ENCODE measurements at regions of chr11 and their contacts with region 1.

Region 1: DNA sequence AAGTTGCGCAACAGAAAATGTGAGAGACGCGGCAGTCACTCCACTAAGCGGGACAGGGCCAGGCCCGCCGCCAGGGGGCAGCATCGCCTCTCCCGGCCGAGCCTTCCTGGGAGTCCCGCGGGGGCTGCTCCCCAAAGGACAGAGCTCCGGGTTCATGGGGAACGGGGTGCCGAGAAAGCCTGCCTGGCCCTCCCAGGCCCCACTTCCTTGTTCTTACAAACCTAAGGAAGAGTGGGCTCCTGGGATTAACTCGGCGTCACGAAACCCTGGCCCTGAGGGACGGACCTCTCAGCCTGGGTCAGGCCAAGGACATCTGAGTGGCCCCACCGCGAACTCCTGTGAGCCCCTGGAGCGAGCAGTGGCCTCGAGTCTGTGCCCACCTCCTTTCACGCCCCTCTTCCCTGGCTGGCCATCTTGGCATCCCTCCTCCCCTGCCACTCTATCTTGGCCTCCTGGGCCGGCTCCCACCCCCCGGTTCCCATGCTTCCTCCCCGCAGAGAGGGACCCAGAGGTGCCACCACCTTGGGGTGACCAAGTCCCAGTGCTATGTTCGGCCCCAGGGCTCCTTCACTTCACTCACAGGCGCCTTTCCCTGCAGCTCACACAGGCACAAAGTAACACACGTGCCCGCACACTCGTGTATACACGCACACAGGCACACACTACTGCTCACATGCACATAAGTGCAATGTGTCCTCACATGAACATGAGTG is 99.9 kb upstream of the FGF3 start:
- DNase-seq: peak in 1 of 2 donors; percentile 93
- H3K4me3 ChIP-seq: peak overlapping the region; percentile 7 to 57
- H3K27ac ChIP-seq: peak overlapping the region; percentile 90 to 98
- H3K4me1 ChIP-seq: peaks cover 25 to 45% of the 10 kb centered on the region in 2 donors
- H3K27me3 ChIP-seq: no peaks in the 10 kb centered on the region
- CTCF ChIP-seq: peak; percentile 93 to 98 (median 96)

Region 2: GRCh38 chr11:69010964-69011623 is 908.0 kb before region 1 on chr11:
- intact Hi-C with region 1: loop called (anchors 10 kb)
- DNase-seq: peak in 1 of 2 donors; percentile 91
- H3K4me3 ChIP-seq: peak overlapping the region; percentile 75 to 84
- H3K27ac ChIP-seq: peak overlapping the region; percentile 93 to 95
- H3K4me1 ChIP-seq: peaks cover 18 to 49% of the 10 kb centered on the region in 2 donors
- H3K27me3 ChIP-seq: no peaks in the 10 kb centered on the region
- CTCF ChIP-seq: no peak

Region 3: DNA sequence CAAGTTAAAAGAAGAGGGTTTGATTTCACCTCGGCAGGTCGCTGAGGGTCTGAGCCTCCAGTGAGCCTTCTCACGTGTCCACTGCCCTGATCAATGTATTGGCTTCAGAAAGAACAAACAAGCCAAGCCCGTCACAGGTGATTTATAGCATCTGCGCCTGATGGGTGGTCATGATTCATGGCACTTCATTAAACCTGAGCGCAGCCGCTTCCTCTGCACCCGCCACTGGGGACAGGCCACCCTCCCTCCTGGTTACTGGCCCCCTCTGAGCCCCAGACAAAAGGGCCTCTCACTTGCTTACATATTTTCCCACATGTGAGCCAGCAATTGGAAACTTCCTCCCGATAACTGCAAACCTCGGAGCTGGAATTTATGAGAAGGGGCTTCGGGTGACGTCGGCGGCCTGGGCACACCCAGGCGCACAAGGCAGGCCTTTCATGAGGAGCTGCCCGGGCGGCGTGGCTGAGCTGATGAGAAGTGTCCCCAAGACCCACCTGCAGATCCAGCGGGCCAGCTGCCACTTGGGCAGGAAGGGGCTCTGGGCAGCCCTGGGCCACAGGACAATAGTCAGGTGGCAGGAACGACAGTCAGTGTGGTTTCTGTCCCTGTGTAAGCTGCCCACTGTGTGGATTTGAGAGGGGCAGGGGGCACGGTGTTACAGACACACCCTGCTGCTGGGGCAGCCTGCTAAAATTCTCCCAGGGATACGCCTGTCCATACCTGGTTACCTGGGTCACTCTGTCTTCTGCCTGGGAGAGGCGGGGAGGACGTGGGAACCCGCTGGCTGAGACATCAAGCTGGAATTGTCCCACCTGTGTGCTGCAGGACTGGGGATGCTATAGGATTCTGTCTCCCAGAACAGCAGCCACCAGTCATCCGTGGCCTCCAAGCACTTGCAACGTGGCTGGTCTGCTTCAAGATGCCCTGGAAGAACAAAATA is 501.7 kb before region 1 on chr11:
- intact Hi-C with region 1: no loop called
- DNase-seq: no peak
- H3K4me3 ChIP-seq: no peak overlapping the region
- H3K27ac ChIP-seq: peak overlapping the region; percentile 63 to 66
- H3K4me1 ChIP-seq: peaks cover 6 to 32% of the 10 kb centered on the region in 2 donors
- H3K27me3 ChIP-seq: no peaks in the 10 kb centered on the region
- CTCF ChIP-seq: no peak

Region 4: GRCh38 chr11:69945188-69945587 is 26.1 kb after region 1 on chr11:
- intact Hi-C with region 1: no loop called
- DNase-seq: no peak
- H3K4me3 ChIP-seq: no peak overlapping the region
- H3K27ac ChIP-seq: no peak overlapping the region
- H3K4me1 ChIP-seq: peaks cover 15 to 25% of the 10 kb centered on the region in 2 donors
- H3K27me3 ChIP-seq: no peaks in the 10 kb centered on the region
- CTCF ChIP-seq: no peak

Region 5: GRCh38 chr11:69968396-69969347 is 49.6 kb after region 1 on chr11:
- intact Hi-C with region 1: no loop called
- DNase-seq: no peak
- H3K4me3 ChIP-seq: no peak overlapping the region
- H3K27ac ChIP-seq: peak overlapping the region; percentile 84 to 86
- H3K4me1 ChIP-seq: peaks cover 0 to 19% of the 10 kb centered on the region in 2 donors
- H3K27me3 ChIP-seq: no peaks in the 10 kb centered on the region
- CTCF ChIP-seq: no peak

Region 6: GRCh38 chr11:69978856-69979614 is 59.9 kb after region 1 on chr11:
- intact Hi-C with region 1: loop called (anchors 1 kb)
- DNase-seq: no peak
- H3K4me3 ChIP-seq: peak overlapping the region in 1 of 2 donors; percentile 3
- H3K27ac ChIP-seq: peak overlapping the region; percentile 87 to 98
- H3K4me1 ChIP-seq: peaks cover 13 to 60% of the 10 kb centered on the region in 2 donors
- H3K27me3 ChIP-seq: no peaks in the 10 kb centered on the region
- CTCF ChIP-seq: no peak

Region 7: DNA sequence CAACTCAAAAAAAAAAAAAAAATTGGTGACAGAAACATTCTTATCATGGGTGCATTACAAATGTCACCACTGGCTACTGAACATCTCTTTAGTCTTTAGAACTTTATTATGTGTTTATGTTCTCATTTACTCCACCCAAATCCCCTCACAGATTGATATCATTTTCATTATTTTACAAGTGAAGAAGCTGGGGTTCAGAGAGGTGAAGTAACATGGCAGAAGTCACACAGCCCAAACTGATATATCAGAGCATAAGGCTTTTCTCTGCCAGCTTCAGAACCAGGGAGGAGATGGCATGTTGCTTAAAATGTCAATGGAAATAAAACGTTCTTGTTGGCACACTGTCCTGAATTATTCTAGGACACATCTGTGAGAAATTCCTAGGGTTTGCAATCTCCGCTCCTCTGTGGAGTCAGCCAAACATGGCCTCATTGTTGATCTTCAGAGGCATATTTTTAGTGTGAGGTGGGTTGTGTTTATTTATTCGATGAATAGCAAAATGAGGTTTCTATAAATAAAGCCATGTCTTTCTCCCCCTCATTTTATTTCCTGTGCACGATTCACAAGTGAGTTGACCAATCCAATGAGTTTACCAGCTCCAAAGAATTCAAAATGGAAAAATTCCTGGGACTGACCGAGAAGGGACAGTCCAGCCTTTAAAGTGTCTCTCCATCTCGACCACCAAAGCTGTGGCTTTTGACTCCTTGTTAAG is 86.2 kb after region 1 on chr11:
- intact Hi-C with region 1: loop called (anchors 5 kb)
- DNase-seq: peak in 1 of 2 donors; percentile 79
- H3K4me3 ChIP-seq: no peak overlapping the region
- H3K27ac ChIP-seq: peak overlapping the region; percentile 82 to 86
- H3K4me1 ChIP-seq: peaks cover 5 to 21% of the 10 kb centered on the region in 2 donors
- H3K27me3 ChIP-seq: no peaks in the 10 kb centered on the region
- CTCF ChIP-seq: no peak

Region 8: DNA sequence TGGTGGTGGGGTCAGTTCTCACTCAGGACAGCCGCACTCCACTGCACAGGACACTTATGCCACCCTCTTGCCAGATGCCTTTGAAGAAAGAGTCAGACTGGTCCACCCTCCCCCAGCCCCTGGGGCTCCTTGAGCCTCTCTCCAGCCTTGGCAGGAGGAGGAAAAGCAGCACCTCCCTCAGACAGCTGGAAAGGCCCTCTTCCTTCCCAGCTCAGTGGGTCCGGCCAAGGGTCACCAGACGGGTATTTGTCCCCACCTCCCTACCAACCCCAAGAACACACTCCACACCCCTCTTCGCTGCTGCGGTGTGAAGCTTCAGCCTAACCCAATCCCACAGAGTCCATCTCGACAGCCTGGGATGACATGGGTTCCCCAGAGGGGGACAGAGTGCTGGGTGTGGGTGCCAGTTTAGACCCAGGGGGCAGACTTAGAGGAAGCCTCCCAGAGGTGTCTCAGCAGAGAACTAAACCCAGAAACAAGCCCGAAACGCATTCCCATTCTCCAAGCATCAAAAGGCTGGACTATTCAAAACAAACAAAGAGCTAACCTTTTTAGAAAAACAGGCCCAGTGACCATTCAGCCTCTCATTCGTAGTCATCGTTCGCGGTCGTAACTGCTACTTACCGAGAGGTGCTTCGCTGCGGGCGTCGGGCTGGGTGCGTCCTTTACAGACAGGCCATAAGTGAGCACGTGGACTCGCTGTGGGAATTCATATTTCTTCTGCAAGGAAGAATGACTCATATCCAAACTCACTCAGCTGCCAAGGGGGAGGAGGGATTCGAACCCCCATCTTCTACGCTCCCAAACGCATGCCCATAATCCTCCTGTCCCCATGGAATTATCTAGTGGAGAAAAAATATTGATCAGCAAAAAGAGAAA is 101.5 kb after region 1 on chr11:
- intact Hi-C with region 1: no loop called
- DNase-seq: peak in 1 of 2 donors; percentile 57
- H3K4me3 ChIP-seq: no peak overlapping the region
- H3K27ac ChIP-seq: peak overlapping the region; percentile 61 to 72
- H3K4me1 ChIP-seq: peaks cover 3 to 45% of the 10 kb centered on the region in 2 donors
- H3K27me3 ChIP-seq: no peaks in the 10 kb centered on the region
- CTCF ChIP-seq: no peak

Region 9: GRCh38 chr11:70105755-70106571 is 186.9 kb after region 1 on chr11:
- intact Hi-C with region 1: loop called (anchors 2 kb)
- DNase-seq: no peak
- H3K4me3 ChIP-seq: no peak overlapping the region
- H3K27ac ChIP-seq: peak overlapping the region; percentile 87 to 92
- H3K4me1 ChIP-seq: peaks cover 20 to 58% of the 10 kb centered on the region in 2 donors
- H3K27me3 ChIP-seq: no peaks in the 10 kb centered on the region
- CTCF ChIP-seq: peak in 2 of 3 experiments; percentile 11 to 15

Region 10: DNA sequence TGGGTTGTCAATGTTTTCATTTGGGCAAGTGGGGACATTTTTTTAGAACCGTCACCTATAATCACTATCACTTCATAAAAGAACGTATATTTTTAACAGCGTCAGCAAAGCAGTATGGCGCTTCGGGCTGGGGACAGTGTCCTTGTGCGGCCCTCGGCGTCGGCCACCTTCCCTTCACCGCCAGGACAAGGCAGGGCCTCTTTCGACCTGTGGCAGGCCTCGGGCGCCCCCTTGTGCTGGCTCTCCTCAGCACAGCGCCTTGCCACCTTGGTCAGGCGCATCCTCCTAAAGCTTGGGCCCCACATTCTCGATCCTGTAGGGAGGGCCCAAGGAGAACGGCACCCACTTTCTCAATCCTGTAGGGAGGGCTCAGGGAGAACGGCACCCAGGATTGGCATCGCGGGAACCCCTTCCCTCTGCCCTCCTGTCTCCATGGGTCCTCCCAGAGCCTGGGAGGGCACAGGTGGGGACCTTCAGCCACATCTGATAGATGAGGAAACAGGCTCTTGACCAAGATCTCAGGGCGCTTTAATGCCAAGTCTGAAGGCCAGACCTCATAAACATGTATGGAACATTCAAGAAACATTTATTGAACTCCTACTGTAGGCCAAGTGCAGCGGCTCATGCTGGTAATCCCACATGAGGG is 272.5 kb after region 1 on chr11:
- intact Hi-C with region 1: loop called (anchors 1 kb)
- DNase-seq: peak in 1 of 2 donors; percentile 85
- H3K4me3 ChIP-seq: no peak overlapping the region
- H3K27ac ChIP-seq: no peak overlapping the region
- H3K4me1 ChIP-seq: peaks cover 0 to 11% of the 10 kb centered on the region in 2 donors
- H3K27me3 ChIP-seq: no peaks in the 10 kb centered on the region
- CTCF ChIP-seq: peak; percentile 91 to 92 (median 92)